Activated B cell treated with CpG ODN at 0.5 μM for 24 hours (primary cell): ENCODE measurements at regions of chr22 and their contacts with region 1.

Region 1: DNA sequence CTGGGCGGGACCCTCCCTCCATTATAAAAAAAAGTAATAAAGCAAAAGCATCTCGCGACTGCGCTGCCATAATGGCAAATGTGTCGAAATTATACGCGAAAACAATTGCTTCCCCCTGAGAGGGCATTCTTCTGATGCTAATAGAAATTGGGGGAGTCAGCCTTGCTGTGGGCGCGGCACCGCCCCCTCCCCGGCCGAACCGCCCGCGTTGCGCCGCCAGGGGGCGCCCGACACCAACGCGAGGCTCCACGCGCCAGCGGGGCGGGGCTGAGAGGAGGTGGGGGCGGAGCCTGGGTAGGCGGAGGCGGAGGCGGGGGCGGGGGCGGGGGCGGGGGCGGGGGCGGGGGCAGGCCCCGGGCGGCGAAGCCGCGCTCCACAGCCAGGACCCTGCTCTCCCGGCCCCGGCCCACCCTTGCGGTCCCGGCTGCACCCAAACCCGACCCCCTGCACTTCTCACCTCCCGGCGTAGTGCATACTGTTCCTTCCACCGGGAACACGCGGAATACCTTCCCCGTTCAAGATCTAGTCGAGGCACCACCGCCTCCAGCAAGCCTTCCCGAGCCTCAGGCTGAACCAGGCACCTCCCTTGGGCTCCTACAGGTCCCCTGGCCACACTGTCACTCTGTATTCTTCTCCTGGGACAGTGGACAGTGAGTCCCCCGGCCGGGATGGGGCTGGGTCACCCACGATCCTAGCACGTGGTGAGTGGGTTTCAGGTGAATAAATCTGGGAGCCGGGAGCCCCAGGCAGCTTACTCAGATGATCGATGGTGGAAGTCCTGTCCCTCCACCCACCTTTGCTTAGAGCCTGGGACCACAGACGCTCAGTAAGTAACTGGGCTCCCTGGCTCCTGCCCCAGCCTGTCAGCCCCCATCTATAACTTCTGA is 15.5 kb upstream of the UPK3A start:
- DNase-seq: peak; percentile 94
- ATAC-seq: peak; percentile 96
- H3K4me3 Mint-ChIP-seq: peak overlapping the region; percentile 85
- H3K27ac Mint-ChIP-seq: no peak overlapping the region
- H3K4me1 Mint-ChIP-seq: peaks cover 20% of the 10 kb centered on the region
- H3K27me3 Mint-ChIP-seq: peaks cover 4% of the 10 kb centered on the region
- CTCF ChIP-seq: no peak

Region 2: DNA sequence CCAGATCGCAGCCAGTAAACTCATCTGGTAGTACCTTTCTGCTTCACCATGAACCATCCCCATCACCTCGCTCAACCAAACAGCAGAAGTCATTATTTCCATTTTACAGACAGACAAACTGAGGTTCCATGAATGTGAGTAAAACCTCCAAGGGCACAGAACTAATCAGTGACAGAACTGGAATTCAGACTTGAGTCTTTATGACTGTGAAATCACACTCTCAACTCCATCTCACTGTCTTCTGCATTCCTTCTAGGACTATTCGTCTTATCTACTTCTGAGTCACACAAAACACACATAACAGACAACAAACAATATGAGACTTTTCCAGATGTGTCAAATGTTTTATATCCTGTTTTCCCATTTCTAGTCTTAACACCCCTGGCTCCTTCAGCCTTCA is 114.8 kb before region 1 on chr22:
- CTCF ChIA-PET with region 1: no interaction called
- POLR2A ChIA-PET with region 1: no interaction called
- intact Hi-C with region 1: no loop called
- DNase-seq: no peak
- ATAC-seq: no peak
- H3K4me3 Mint-ChIP-seq: no peak overlapping the region
- H3K27ac Mint-ChIP-seq: no peak overlapping the region
- H3K4me1 Mint-ChIP-seq: no peaks in the 10 kb centered on the region
- H3K27me3 Mint-ChIP-seq: no peaks in the 10 kb centered on the region
- CTCF ChIP-seq: no peak

Region 3: GRCh38 chr22:45284705-45285262 is 15.6 kb after region 1 on chr22 and contains the start of gene UPK3A:
- CTCF ChIA-PET with region 1: interaction called, 3 read pairs
- POLR2A ChIA-PET with region 1: interaction called, 11 read pairs
- intact Hi-C with region 1: loop called (anchors 1 kb)
- DNase-seq: peak; percentile 84
- ATAC-seq: peak; percentile 86
- H3K4me3 Mint-ChIP-seq: peak within 1 kb of the TSS; percentile 54
- H3K27ac Mint-ChIP-seq: peak within 1 kb of the TSS; percentile 61
- H3K4me1 Mint-ChIP-seq: peaks cover 57% of the 10 kb centered on the region
- H3K27me3 Mint-ChIP-seq: no peaks in the 10 kb centered on the region
- CTCF ChIP-seq: no peak
- total RNA-seq, gene UPK3A: 1.4 and 1.6 TPM in 2 replicates

Region 4: DNA sequence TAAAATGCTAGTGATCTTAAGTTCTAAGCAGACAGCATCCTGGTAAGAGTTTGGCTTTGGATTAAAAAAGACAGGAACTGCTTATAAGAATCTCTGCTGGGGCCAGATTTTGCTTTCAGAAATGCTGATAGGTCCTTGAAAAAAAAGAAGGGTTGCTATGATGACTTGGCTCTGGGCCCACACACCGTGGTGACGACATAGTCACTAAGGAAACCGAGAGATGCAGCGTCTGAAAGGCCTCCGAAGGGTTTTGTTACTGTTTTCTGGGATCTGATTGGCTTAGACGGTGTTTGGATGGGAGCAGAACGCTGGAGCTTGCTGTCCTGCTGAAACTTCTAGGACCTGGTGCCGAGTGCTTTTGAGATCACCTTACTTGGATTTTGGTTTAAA is 49.0 kb after region 1 on chr22:
- CTCF ChIA-PET with region 1: no interaction called
- POLR2A ChIA-PET with region 1: no interaction called
- intact Hi-C with region 1: loop called (anchors 1 kb)
- DNase-seq: peak; percentile 57
- ATAC-seq: peak; percentile 88
- H3K4me3 Mint-ChIP-seq: peak overlapping the region; percentile 80
- H3K27ac Mint-ChIP-seq: peak overlapping the region; percentile 95
- H3K4me1 Mint-ChIP-seq: peaks cover 73% of the 10 kb centered on the region
- H3K27me3 Mint-ChIP-seq: no peaks in the 10 kb centered on the region
- CTCF ChIP-seq: no peak

Region 5: GRCh38 chr22:45435544-45436139 is 166.4 kb after region 1 on chr22:
- CTCF ChIA-PET with region 1: interaction called, 5 read pairs
- POLR2A ChIA-PET with region 1: interaction called, 5 read pairs
- intact Hi-C with region 1: loop called (anchors 1 kb)
- DNase-seq: peak; percentile 71
- ATAC-seq: peak; percentile 98
- H3K4me3 Mint-ChIP-seq: no peak overlapping the region
- H3K27ac Mint-ChIP-seq: no peak overlapping the region
- H3K4me1 Mint-ChIP-seq: peaks cover 15% of the 10 kb centered on the region
- H3K27me3 Mint-ChIP-seq: peaks cover 2% of the 10 kb centered on the region
- CTCF ChIP-seq: peak; percentile 55

Region 6: DNA sequence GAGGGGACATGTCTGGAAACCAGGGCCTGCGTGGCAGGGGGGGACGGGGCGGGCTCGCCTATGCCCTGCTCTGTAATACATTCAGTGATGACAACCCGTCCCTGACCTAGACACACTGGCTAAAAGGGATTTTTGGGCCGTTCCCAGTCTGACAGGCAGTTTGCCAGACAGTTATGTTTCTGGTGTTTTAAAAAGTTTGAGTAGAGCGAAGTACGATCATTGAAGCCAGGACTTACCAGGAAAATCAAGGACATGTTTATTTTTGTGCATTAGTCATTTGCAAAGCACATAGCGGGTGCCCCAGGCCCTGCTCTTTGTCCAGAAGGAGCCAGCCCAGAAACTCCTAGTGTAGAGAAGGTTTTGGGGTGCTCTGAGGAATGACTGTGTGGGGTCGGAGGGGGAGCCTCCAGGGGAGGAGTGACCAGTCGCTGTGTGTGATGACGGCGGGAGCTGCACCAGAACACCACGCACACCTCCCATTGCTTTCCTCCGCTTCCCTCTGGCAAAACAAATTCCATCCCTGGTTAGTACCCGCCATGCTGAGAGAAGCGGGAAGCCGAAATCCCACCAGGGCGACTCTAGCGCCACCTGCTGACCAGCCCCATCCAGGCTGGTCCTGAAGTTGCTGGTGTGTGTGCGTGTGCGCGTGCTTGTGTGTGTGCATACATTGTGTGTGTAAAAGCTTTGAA is 284.3 kb after region 1 on chr22:
- CTCF ChIA-PET with region 1: no interaction called
- POLR2A ChIA-PET with region 1: no interaction called
- intact Hi-C with region 1: loop called (anchors 2 kb)
- DNase-seq: peak; percentile 32
- ATAC-seq: no peak
- H3K4me3 Mint-ChIP-seq: no peak overlapping the region
- H3K27ac Mint-ChIP-seq: no peak overlapping the region
- H3K4me1 Mint-ChIP-seq: no peaks in the 10 kb centered on the region
- H3K27me3 Mint-ChIP-seq: peaks cover 22% of the 10 kb centered on the region
- CTCF ChIP-seq: no peak